OCI-LY7 (cell line): ENCODE measurements at regions of chr1 and their contacts with region 1.

Region 1: GRCh38 chr1:198937231-198938031 is 298.6 kb downstream of the PTPRC start:
- DNase-seq: peak; percentile 94
- H3K4me3 ChIP-seq: peak overlapping the region; percentile 78
- H3K27ac ChIP-seq: peak overlapping the region; percentile 88
- H3K4me1 ChIP-seq: peaks cover 29% of the 10 kb centered on the region
- CTCF ChIP-seq: no peak

Region 2: GRCh38 chr1:198157241-198157846 is 780.1 kb before region 1 on chr1:
- CTCF ChIA-PET with region 1: no interaction called
- POLR2A ChIA-PET with region 1: interaction called, 4 read pairs
- intact Hi-C with region 1: loop called (anchors 5 kb)
- DNase-seq: peak; percentile 91
- H3K4me3 ChIP-seq: peak overlapping the region; percentile 97
- H3K27ac ChIP-seq: peak overlapping the region; percentile 70
- H3K4me1 ChIP-seq: peaks cover 30% of the 10 kb centered on the region
- CTCF ChIP-seq: no peak

Region 3: DNA sequence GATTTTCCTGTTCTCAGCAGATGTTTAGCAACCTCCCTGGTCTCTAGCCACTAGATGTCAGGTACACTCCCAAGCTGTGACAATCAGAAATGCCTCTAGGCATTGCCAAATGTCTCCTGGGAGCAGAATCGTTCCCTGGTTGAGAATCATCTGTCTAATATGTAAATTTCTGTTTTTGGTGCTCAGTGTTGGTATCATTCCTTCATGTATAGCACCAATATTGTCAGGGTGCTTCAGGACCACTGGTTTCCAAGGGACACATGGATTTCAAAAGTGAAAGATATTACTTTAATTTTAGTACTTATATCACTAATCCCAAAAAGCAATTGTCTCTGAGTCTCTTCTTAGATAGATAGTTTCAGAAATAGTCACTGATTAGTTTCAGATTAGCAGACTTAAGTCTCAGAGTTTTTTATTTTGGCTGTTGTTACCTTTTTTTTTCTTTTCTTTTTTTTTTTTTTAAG is 138.5 kb before region 1 on chr1:
- CTCF ChIA-PET with region 1: no interaction called
- POLR2A ChIA-PET with region 1: no interaction called
- intact Hi-C with region 1: no loop called
- DNase-seq: peak; percentile 12
- H3K4me3 ChIP-seq: no peak overlapping the region
- H3K27ac ChIP-seq: no peak overlapping the region
- H3K4me1 ChIP-seq: no peaks in the 10 kb centered on the region
- CTCF ChIP-seq: peak; percentile 44; the same call in 1 of the 2 replicates

Region 4: DNA sequence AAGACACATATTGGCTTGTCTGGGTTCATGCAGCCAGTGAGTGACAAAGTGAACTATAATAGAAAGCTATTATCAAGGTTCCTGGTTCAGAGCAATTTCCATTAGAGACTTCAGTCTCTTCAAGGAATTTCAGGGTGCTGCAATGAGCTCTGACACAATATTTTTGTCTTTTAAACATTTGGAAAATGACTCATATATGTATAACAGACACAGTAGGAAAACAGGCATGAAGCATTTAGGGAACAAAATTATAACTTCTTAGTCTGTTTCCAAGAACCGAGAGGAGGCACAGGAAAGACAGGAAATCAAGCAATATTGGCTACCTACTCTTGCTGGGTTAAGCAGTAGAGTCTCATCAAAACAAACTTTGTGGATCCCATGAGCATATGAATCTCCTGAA is 128.2 kb before region 1 on chr1:
- CTCF ChIA-PET with region 1: no interaction called
- POLR2A ChIA-PET with region 1: no interaction called
- intact Hi-C with region 1: no loop called
- DNase-seq: no peak
- H3K4me3 ChIP-seq: no peak overlapping the region
- H3K27ac ChIP-seq: no peak overlapping the region
- H3K4me1 ChIP-seq: no peaks in the 10 kb centered on the region
- CTCF ChIP-seq: no peak

Region 5: GRCh38 chr1:199009447-199009846 is 72.0 kb after region 1 on chr1:
- CTCF ChIA-PET with region 1: no interaction called
- POLR2A ChIA-PET with region 1: interaction called, 19 read pairs
- intact Hi-C with region 1: no loop called
- DNase-seq: peak; percentile 58
- H3K4me3 ChIP-seq: no peak overlapping the region
- H3K27ac ChIP-seq: peak overlapping the region; percentile 7
- H3K4me1 ChIP-seq: peaks cover 28% of the 10 kb centered on the region
- CTCF ChIP-seq: no peak

Region 6: GRCh38 chr1:199089393-199090122 is 152.1 kb after region 1 on chr1:
- CTCF ChIA-PET with region 1: interaction called, 4 read pairs
- POLR2A ChIA-PET with region 1: interaction called, 5 read pairs
- intact Hi-C with region 1: loop called (anchors 1 kb)
- DNase-seq: peak; percentile 76
- H3K4me3 ChIP-seq: peak overlapping the region; percentile 24
- H3K27ac ChIP-seq: peak overlapping the region; percentile 71
- H3K4me1 ChIP-seq: peaks cover 33% of the 10 kb centered on the region
- CTCF ChIP-seq: no peak